Common myeloid progenitor, CD34-positive (primary cell): ENCODE measurements at regions of chr5 and their contacts with region 1.

Region 1: DNA sequence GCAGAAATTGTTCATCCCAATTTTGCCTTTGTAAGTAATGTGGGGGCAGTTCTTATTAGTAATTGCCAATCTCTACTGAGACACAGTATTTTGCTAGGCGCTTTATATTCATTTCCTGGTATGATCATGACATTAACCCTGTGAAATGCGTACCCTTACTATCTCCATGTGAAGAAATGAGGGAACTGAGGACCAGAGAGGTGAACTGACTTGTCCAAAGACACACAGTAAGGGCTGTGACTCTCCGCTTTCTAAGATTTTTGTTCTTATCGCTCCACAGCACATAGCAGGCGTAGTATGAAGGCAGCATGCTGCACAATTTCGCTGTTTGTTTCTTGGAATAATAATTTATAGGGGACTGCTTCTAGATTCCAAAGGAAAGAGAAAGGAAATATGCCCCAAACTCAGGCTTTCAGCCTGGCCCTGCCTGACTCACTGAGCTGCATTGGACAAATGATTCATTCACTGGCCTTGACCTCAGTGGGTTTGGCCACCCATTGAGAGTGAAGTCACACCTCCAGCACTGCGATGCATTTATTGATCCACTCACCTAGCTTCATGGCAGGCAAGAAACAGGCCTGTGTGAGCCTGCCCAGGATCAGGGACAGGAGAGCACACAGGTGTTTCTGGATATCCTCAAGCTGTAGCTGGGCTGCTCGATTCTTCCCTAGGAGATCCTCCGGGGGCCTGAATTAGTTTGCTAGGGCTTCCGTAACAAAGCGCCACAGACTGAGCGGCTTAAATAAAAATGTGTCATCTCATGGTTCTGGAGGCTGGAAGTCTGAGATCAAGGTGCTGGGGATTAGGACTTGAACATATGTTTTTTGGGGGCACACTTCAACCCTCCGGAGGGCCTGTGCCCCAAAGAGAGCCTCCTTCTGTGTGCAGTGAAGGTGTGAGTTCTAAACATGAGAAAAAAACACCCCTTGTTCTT is 7.2 kb upstream of the DUSP1 start:
- DNase-seq: peak in 1 of 3 donors; percentile 48
- H3K4me3 ChIP-seq: peak overlapping the region in 4 of 7 experiments; percentile 20 to 60 (median 42)
- H3K27ac ChIP-seq: peak overlapping the region; percentile 37 to 76
- H3K4me1 ChIP-seq: peaks cover 28 to 49% (median 41%) of the 10 kb centered on the region in 4 experiments
- H3K27me3 ChIP-seq: no peaks in the 10 kb centered on the region

Region 2: DNA sequence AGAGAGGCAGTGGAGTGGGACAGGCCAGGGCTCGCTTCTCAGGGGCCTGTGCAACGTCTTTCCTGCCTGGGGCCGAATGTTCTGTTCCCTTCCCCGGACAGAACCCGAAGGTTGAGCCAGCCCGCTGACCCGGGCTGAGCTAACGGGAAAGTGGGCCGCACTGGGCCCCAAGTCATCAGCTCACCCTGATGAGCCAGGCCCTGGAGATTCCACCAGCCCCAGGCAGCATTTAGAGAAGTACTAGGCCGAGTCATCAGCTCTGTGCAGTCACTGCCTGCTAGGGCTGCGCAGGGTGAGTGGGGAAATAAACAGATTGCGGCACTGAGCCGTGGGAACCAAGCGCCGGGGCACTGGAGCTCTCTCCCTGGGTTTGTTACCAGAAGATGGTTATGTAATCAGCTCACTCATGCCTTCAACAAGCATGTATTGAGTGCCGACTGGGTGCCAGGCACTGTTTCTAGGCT is 22.0 kb after region 1 on chr5:
- CTCF ChIA-PET with region 1: interaction called, 10 read pairs
- POLR2A ChIA-PET with region 1: interaction called, 3 read pairs
- DNase-seq: peak in 2 of 3 donors; percentile 68 to 74
- H3K4me3 ChIP-seq: no peak overlapping the region
- H3K27ac ChIP-seq: no peak overlapping the region
- H3K4me1 ChIP-seq: peaks cover 0 to 49% (median 5%) of the 10 kb centered on the region in 4 experiments
- H3K27me3 ChIP-seq: no peaks in the 10 kb centered on the region

Region 3: GRCh38 chr5:172920447-172920849 is 142.3 kb after region 1 on chr5:
- CTCF ChIA-PET with region 1: no interaction called
- POLR2A ChIA-PET with region 1: no interaction called
- DNase-seq: peak in 2 of 3 donors; percentile 30 to 56
- H3K4me3 ChIP-seq: no peak overlapping the region
- H3K27ac ChIP-seq: no peak overlapping the region
- H3K4me1 ChIP-seq: peaks cover 0 to 17% (median 7%) of the 10 kb centered on the region in 4 experiments
- H3K27me3 ChIP-seq: no peaks in the 10 kb centered on the region